ENCODE measurements at regions of chr12 and their contacts with region 1.

Region 1: GRCh38 chr12:26119391-26119981 is 5.4 kb downstream of the BHLHE41 start:
- DNase-seq: no peak
- H3K4me3 Mint-ChIP-seq: no peak overlapping the region
- H3K27ac Mint-ChIP-seq: no peak overlapping the region
- H3K4me1 Mint-ChIP-seq: peaks cover 20% of the 10 kb centered on the region
- H3K27me3 Mint-ChIP-seq: peaks cover 74% of the 10 kb centered on the region

Region 2: DNA sequence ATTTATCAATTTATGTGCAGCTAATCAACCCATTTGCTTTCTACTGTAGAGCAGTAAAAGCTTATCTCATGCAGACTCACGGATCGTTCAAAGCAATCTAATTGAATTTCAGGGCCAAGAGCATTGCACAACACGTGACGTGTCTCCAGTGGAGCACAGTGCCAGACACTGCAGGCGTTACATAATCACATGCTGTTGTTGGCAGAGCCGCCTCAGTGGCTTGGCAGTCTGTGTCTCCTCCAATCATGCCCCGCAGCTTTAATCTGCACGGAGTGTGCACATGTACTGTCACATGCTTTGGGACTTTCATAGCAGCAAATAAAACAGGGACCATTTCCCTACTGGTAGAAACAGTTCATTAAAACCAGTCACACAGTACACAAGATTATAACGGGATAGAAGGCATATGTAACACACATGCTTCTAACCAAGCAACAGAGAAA is 404.2 kb after region 1 on chr12:
- CTCF ChIA-PET with region 1: interaction called, 14 read pairs
- POLR2A ChIA-PET with region 1: no interaction called
- DNase-seq: no peak
- H3K4me3 Mint-ChIP-seq: no peak overlapping the region
- H3K27ac Mint-ChIP-seq: no peak overlapping the region
- H3K4me1 Mint-ChIP-seq: peaks cover 12% of the 10 kb centered on the region
- H3K27me3 Mint-ChIP-seq: no peaks in the 10 kb centered on the region

Region 3: GRCh38 chr12:26614020-26614616 is 494.6 kb after region 1 on chr12:
- CTCF ChIA-PET with region 1: interaction called, 11 read pairs
- POLR2A ChIA-PET with region 1: no interaction called
- DNase-seq: peak; percentile 28
- H3K4me3 Mint-ChIP-seq: no peak overlapping the region
- H3K27ac Mint-ChIP-seq: no peak overlapping the region
- H3K4me1 Mint-ChIP-seq: no peaks in the 10 kb centered on the region
- H3K27me3 Mint-ChIP-seq: no peaks in the 10 kb centered on the region

Region 4: GRCh38 chr12:26651566-26652188 is 532.2 kb after region 1 on chr12:
- CTCF ChIA-PET with region 1: interaction called, 12 read pairs
- POLR2A ChIA-PET with region 1: no interaction called
- DNase-seq: peak; percentile 48
- H3K4me3 Mint-ChIP-seq: no peak overlapping the region
- H3K27ac Mint-ChIP-seq: no peak overlapping the region
- H3K4me1 Mint-ChIP-seq: no peaks in the 10 kb centered on the region
- H3K27me3 Mint-ChIP-seq: no peaks in the 10 kb centered on the region

Measured in activated CD4-positive, alpha-beta memory T cell treated with anti-CD3 and anti-CD28 coated beads, Interleukin-2, amount 10 ng/mL, durations not matched to agents 7 days and 5 days (primary cell).